ENCODE measurements at regions of chr1 and their contacts with region 1.

Region 1: DNA sequence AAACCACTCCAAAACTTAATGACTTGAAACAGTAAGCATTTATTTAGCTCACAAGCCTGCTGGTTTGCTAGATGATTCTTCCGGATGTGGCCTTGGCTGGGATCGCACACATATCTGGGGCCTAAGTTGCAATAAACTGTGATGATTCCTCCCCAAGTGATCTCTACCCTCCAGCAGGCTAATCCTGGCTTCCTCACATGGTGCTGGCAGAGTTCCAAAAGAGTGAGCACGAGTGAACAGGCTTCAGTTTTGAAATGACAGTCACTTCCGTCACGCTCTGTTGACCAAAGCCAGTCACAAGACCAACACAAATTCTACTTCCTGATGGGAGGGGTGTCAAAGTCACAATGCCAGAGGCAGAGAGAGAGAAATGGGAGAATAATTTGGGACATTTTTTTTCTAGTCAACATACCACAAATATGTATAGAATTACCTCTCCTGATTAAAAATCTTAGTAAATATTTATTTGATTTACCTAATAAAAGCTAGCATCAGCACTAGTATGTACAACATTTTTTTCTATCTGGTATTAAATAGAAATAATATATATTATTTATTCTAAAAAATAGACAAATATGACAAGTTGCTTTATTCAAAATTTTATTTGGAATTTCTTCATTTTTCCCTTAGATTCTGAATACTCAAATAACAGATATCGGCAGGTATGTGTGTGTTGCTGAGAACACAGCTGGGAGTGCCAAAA is 292.7 kb downstream of the TPR start:
- DNase-seq: peak; percentile 68 to 88 (median 80)
- ATAC-seq: peak; percentile 78 to 95 (median 86)
- H3K4me3 ChIP-seq: no peak overlapping the region
- H3K27ac ChIP-seq: peak overlapping the region in 6 of 12 donors; percentile 7 to 49 (median 20)
- H3K4me1 ChIP-seq: peaks cover 0 to 13% (median 6%) of the 10 kb centered on the region in 12 donors
- H3K27me3 ChIP-seq: no peaks in the 10 kb centered on the region
- CTCF ChIP-seq: no peak
- POLR2A ChIP-seq: no peak

Region 2: GRCh38 chr1:185996211-185996610 is 86.2 kb before region 1 on chr1:
- intact Hi-C with region 1: loop called in 1 of 10 experiments (anchors 10 kb)
- DNase-seq: peak in 4 of 5 donors; percentile 9 to 65 (median 47)
- ATAC-seq: peak in 1 of 4 donors; percentile 63
- H3K4me3 ChIP-seq: no peak overlapping the region
- H3K27ac ChIP-seq: no peak overlapping the region
- H3K4me1 ChIP-seq: no peaks in the 10 kb centered on the region
- H3K27me3 ChIP-seq: no peaks in the 10 kb centered on the region
- CTCF ChIP-seq: no peak
- POLR2A ChIP-seq: no peak

Region 3: DNA sequence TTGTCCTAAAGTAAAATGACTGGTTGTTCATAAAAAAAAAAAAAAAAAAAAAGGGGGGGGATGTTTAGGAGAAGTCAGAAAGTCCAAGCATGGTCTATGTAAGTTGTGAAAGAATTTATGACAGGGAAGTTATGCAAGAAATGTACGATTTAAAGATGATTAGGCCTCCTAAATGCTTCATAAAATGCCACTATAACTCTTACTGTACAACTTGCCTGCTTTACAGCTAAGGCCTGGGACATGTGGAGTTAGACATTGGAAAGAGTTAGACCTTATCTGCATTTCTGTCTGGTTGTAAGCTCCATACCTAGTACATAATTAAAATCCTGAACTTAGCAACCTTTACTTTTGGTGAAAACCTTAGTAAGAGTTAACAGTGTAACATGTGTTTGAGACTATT is 142.7 kb after region 1 on chr1:
- intact Hi-C with region 1: no loop called
- DNase-seq: no peak
- ATAC-seq: no peak
- H3K4me3 ChIP-seq: no peak overlapping the region
- H3K27ac ChIP-seq: no peak overlapping the region
- H3K4me1 ChIP-seq: peaks cover 0 to 4% (median 0%) of the 10 kb centered on the region in 12 donors
- H3K27me3 ChIP-seq: no peaks in the 10 kb centered on the region
- CTCF ChIP-seq: no peak
- POLR2A ChIP-seq: no peak

Measured in heart left ventricle (tissue), 16 donors.